ENCODE measurements at regions of chr2 and their contacts with region 1.

Region 1: DNA sequence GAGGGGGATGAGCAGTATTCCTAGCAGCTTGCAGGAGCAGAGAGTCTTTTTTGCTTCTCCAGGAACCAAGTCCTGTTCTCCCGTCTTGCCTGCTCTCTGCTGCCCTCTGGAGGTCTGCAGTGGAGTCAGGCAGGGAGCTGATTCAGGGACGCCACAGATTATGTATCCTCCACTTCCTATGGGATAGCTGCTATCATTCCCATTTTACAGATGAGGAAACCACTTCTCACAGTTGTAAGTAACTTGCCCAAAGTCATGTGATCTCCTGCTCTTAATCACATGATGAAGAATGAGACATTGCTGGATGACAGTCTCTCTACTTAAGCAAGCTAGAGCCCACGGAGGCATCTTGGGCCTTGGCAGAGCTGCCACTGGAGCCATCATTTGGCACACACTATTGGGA is 8.3 kb downstream of the SLC4A5 start:
- DNase-seq: peak; percentile 83
- H3K4me3 Mint-ChIP-seq: no peak overlapping the region
- H3K27ac Mint-ChIP-seq: no peak overlapping the region
- H3K4me1 Mint-ChIP-seq: peaks cover 11% of the 10 kb centered on the region
- H3K27me3 Mint-ChIP-seq: no peaks in the 10 kb centered on the region

Region 2: GRCh38 chr2:74250189-74250631 is 84.7 kb before region 1 on chr2:
- CTCF ChIA-PET with region 1: interaction called, 116 read pairs
- DNase-seq: peak; percentile 74
- H3K4me3 Mint-ChIP-seq: no peak overlapping the region
- H3K27ac Mint-ChIP-seq: peak overlapping the region; percentile 60
- H3K4me1 Mint-ChIP-seq: peaks cover 3% of the 10 kb centered on the region
- H3K27me3 Mint-ChIP-seq: peaks cover 4% of the 10 kb centered on the region

Region 3: DNA sequence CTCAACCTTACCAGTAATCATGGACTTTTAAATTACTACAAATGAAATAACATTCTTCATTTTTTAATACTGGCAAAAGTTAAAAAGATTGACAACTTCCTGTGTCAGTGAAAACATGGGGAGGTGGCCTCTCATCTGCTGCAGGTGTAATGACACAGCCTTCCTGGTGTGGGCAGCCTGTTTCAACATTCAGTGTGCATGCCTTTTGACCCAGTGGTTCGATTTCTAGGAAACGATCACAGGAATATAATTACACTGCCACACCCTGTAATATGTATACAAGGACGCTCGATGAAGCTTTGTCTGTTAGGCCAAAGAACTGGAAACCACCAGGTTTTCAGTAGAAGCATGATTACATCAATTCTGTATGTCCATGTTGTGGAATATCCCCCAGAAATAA is 67.9 kb before region 1 on chr2:
- CTCF ChIA-PET with region 1: interaction called, 36 read pairs
- DNase-seq: peak; percentile 83
- H3K4me3 Mint-ChIP-seq: peak overlapping the region; percentile 48
- H3K27ac Mint-ChIP-seq: peak overlapping the region; percentile 97
- H3K4me1 Mint-ChIP-seq: peaks cover 43% of the 10 kb centered on the region
- H3K27me3 Mint-ChIP-seq: no peaks in the 10 kb centered on the region

Region 4: GRCh38 chr2:74345272-74345943 is 10.5 kb after region 1 on chr2:
- CTCF ChIA-PET with region 1: interaction called, 23 read pairs
- DNase-seq: no peak
- H3K4me3 Mint-ChIP-seq: no peak overlapping the region
- H3K27ac Mint-ChIP-seq: no peak overlapping the region
- H3K4me1 Mint-ChIP-seq: no peaks in the 10 kb centered on the region
- H3K27me3 Mint-ChIP-seq: peaks cover 4% of the 10 kb centered on the region

Region 5: GRCh38 chr2:74391580-74392448 is 56.9 kb after region 1 on chr2:
- CTCF ChIA-PET with region 1: interaction called, 12 read pairs
- DNase-seq: peak; percentile 96
- H3K4me3 Mint-ChIP-seq: peak overlapping the region; percentile 93
- H3K27ac Mint-ChIP-seq: peak overlapping the region; percentile 97
- H3K4me1 Mint-ChIP-seq: peaks cover 5% of the 10 kb centered on the region
- H3K27me3 Mint-ChIP-seq: peaks cover 12% of the 10 kb centered on the region

Measured in activated naive CD4-positive, alpha-beta T cell treated with anti-CD3 and anti-CD28 coated beads, Interleukin-2, amount 10 ng/mL, durations not matched to agents 7 days and 5 days (primary cell).